CD4-positive, alpha-beta T cell (primary cell): ENCODE measurements at regions of chr13 and their contacts with region 1.

Region 1: GRCh38 chr13:74133657-74134201 is 475 bp downstream of the KLF12 start:
- DNase-seq: peak; percentile 77 to 97 (median 85)
- ATAC-seq: peak; percentile 55
- H3K4me3 ChIP-seq: peak overlapping the region; percentile 88
- H3K4me3 Mint-ChIP-seq: peak overlapping the region; percentile 100
- H3K27ac ChIP-seq: peak overlapping the region; percentile 86 to 90
- H3K27ac Mint-ChIP-seq: no peak overlapping the region
- H3K4me1 ChIP-seq: peaks cover 31% of the 10 kb centered on the region
- H3K4me1 Mint-ChIP-seq: peaks cover 42% of the 10 kb centered on the region
- H3K27me3 ChIP-seq: no peaks in the 10 kb centered on the region
- H3K27me3 Mint-ChIP-seq: peaks cover 6% of the 10 kb centered on the region
- CTCF ChIP-seq: no peak

Region 2: DNA sequence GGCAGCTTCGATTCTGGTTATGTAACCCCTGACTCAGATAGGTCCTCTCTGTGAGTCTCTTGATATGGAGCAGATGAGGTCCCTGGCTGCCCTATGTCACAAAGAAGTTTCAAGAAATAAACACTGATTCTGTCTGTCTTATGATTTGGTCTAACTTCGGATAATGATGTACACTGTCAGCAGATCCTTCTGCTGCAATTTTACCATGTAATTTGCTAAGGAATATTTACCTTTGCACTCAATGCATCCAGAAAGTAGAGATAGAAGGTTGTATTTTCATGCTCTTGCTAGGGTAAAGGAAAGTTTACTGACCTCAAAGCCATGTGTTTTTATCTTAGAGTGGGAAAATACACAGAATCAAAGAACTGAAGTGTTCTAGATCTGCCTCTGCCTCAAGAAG is 976.7 kb before region 1 on chr13:
- CTCF ChIA-PET with region 1: no interaction called
- POLR2A ChIA-PET with region 1: no interaction called
- intact Hi-C with region 1: no loop called
- DNase-seq: no peak
- ATAC-seq: no peak
- H3K4me3 ChIP-seq: no peak overlapping the region
- H3K4me3 Mint-ChIP-seq: no peak overlapping the region
- H3K27ac ChIP-seq: no peak overlapping the region
- H3K27ac Mint-ChIP-seq: no peak overlapping the region
- H3K4me1 ChIP-seq: no peaks in the 10 kb centered on the region
- H3K4me1 Mint-ChIP-seq: no peaks in the 10 kb centered on the region
- H3K27me3 ChIP-seq: no peaks in the 10 kb centered on the region
- H3K27me3 Mint-ChIP-seq: no peaks in the 10 kb centered on the region
- CTCF ChIP-seq: no peak

Region 3: DNA sequence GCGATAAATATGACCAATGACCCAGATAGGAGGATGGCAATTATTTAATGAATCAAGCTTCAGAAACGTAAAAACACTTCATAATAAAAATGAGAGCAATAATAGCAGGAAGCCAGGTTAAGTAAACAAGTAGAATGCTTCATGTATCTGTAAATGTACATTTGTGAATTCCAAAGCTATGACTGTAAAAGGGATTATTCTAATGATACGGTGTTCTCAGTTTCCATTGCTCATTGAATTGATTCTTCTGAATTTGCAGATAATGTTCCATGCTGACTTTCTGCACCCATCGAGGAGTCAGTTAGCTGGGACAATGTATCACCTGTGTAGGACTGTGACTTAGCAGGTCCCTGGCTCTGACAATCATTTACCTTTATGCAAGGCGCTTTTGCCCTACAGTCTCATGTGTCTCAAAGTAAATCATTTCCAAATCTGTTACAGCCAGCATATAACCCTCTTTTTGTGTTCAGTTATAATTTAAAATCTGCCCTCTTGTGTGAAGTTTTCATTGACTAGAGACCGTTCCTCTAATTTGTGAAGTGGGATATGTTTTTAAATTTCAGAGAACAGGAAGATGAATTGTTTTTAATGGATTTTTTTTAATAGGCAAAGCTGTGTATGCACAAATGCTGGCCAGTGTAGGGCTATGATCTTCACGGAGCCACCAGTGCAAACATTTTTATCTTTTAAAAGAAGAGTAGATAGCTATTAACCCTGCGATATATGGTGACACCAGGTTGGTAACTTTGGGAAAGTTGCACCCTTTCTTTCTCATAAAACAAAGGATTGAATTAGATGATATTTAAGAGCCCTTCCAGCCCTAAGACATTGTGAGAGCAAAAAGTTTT is 807.8 kb before region 1 on chr13:
- CTCF ChIA-PET with region 1: no interaction called
- POLR2A ChIA-PET with region 1: no interaction called
- intact Hi-C with region 1: no loop called
- DNase-seq: no peak
- ATAC-seq: no peak
- H3K4me3 ChIP-seq: no peak overlapping the region
- H3K4me3 Mint-ChIP-seq: no peak overlapping the region
- H3K27ac ChIP-seq: no peak overlapping the region
- H3K27ac Mint-ChIP-seq: no peak overlapping the region
- H3K4me1 ChIP-seq: no peaks in the 10 kb centered on the region
- H3K4me1 Mint-ChIP-seq: no peaks in the 10 kb centered on the region
- H3K27me3 ChIP-seq: no peaks in the 10 kb centered on the region
- H3K27me3 Mint-ChIP-seq: peaks cover 8% of the 10 kb centered on the region
- CTCF ChIP-seq: no peak

Region 4: DNA sequence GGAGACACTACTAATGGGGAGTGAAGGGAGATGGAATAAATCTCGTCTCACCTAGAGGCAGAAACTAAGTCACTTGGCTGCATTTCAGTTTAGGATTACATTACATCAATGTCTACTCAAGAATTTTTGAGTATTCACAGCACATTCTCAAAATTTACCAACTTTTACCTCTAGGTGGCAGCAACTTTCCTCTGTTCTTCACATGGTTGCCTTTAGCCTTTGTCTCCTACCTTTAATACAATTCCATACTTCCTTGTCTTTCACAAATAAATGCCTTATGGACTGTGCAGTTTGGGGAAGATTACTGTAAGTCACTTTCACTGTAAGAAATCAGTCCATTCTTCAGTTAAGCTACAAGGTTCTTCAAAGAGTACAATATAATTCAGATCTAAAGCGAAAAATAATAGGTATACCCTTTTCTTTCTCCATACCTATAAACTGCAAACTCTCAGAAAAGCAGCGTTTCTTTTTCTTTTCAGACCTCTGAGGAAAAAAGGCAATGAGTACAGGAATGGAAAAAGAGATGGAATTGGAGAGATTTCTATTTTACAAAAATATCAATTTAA is 378.9 kb before region 1 on chr13:
- CTCF ChIA-PET with region 1: no interaction called
- POLR2A ChIA-PET with region 1: interaction called, 4 read pairs
- intact Hi-C with region 1: loop called in 1 of 2 experiments (anchors 10 kb)
- DNase-seq: peak in 7 of 14 experiments; percentile 4 to 78 (median 59)
- ATAC-seq: peak; percentile 60
- H3K4me3 ChIP-seq: no peak overlapping the region
- H3K4me3 Mint-ChIP-seq: no peak overlapping the region
- H3K27ac ChIP-seq: no peak overlapping the region
- H3K27ac Mint-ChIP-seq: peak overlapping the region; percentile 21
- H3K4me1 ChIP-seq: peaks cover 2% of the 10 kb centered on the region
- H3K4me1 Mint-ChIP-seq: peaks cover 62% of the 10 kb centered on the region
- H3K27me3 ChIP-seq: no peaks in the 10 kb centered on the region
- H3K27me3 Mint-ChIP-seq: no peaks in the 10 kb centered on the region
- CTCF ChIP-seq: peak; percentile 86

Region 5: DNA sequence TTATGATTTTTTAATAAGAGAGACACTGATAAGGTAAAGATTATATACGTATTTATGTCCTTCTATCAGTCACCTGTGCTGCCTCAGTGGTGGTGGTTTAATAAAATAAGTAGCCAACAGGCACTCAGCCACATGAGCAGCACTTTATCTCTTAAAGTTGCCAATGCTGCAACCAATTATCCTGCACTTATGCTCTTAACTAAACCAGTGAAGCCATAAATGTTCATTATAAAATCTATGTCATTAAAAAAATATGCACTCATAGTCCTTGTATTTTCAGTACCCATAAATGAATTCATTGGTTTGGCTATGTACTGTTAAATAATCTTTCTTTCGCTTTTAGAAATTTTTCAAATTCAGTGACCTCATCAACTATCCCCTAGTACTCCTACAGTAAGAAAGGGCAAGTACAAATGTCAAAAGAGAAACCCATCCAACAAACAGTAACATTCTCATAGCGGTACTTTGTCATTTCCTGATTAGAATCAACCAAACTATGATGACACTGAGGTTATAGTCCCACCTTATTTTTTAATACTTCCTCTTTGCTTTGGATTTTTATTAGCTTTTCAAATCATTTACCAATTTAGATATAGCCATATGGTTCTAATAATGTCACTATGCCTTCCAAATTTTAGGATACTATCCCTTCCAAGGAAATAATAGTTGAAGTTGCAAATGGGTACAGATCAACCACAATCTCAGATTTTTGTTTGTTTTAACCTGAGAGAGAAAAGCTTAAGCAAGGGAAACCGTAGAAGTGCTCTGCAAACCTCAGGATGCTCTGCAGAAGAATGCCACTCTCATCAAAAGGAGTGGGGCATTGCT is 190.4 kb before region 1 on chr13:
- CTCF ChIA-PET with region 1: no interaction called
- POLR2A ChIA-PET with region 1: interaction called, 4 read pairs
- intact Hi-C with region 1: loop called in 1 of 2 experiments (anchors 5 kb)
- DNase-seq: peak in 3 of 14 experiments; percentile 56 to 83 (median 60)
- ATAC-seq: peak; percentile 92
- H3K4me3 ChIP-seq: no peak overlapping the region
- H3K4me3 Mint-ChIP-seq: peak overlapping the region; percentile 47
- H3K27ac ChIP-seq: peak overlapping the region; percentile 57 to 82
- H3K27ac Mint-ChIP-seq: peak overlapping the region; percentile 87
- H3K4me1 ChIP-seq: peaks cover 34% of the 10 kb centered on the region
- H3K4me1 Mint-ChIP-seq: peaks cover 89% of the 10 kb centered on the region
- H3K27me3 ChIP-seq: no peaks in the 10 kb centered on the region
- H3K27me3 Mint-ChIP-seq: no peaks in the 10 kb centered on the region
- CTCF ChIP-seq: no peak

Region 6: DNA sequence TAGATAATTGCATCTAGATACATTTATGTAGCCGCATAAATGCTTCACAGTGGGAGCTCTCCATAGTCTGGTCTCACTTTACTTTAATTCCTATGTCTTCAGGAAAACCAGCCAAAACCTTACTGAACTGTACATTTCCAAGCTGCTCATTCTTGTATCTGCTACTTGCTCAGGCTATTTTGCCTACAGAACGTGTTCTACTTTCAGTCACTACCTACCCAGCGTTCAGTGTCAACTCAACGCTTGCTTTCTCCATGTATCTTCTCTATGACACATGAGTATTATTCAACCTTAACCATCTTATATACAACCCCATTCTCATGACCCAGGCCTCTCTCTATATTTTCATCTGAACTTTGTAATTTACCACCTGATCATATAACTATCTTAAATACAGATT is 101.4 kb before region 1 on chr13:
- CTCF ChIA-PET with region 1: no interaction called
- POLR2A ChIA-PET with region 1: interaction called, 33 read pairs
- intact Hi-C with region 1: loop called (anchors 2 to 5 kb)
- DNase-seq: no peak
- ATAC-seq: no peak
- H3K4me3 ChIP-seq: no peak overlapping the region
- H3K4me3 Mint-ChIP-seq: no peak overlapping the region
- H3K27ac ChIP-seq: no peak overlapping the region
- H3K27ac Mint-ChIP-seq: peak overlapping the region; percentile 4
- H3K4me1 ChIP-seq: peaks cover 9% of the 10 kb centered on the region
- H3K4me1 Mint-ChIP-seq: peaks cover 86% of the 10 kb centered on the region
- H3K27me3 ChIP-seq: no peaks in the 10 kb centered on the region
- H3K27me3 Mint-ChIP-seq: no peaks in the 10 kb centered on the region
- CTCF ChIP-seq: no peak

Region 7: GRCh38 chr13:74090869-74091605 is 42.7 kb before region 1 on chr13:
- CTCF ChIA-PET with region 1: no interaction called
- POLR2A ChIA-PET with region 1: interaction called, 8 read pairs
- intact Hi-C with region 1: loop called (anchors 5 kb)
- DNase-seq: peak in 3 of 14 experiments; percentile 51 to 62 (median 52)
- ATAC-seq: peak; percentile 67
- H3K4me3 ChIP-seq: no peak overlapping the region
- H3K4me3 Mint-ChIP-seq: peak overlapping the region; percentile 64
- H3K27ac ChIP-seq: no peak overlapping the region
- H3K27ac Mint-ChIP-seq: peak overlapping the region; percentile 61
- H3K4me1 ChIP-seq: peaks cover 23% of the 10 kb centered on the region
- H3K4me1 Mint-ChIP-seq: peaks cover 72% of the 10 kb centered on the region
- H3K27me3 ChIP-seq: no peaks in the 10 kb centered on the region
- H3K27me3 Mint-ChIP-seq: no peaks in the 10 kb centered on the region
- CTCF ChIP-seq: no peak

Region 8: DNA sequence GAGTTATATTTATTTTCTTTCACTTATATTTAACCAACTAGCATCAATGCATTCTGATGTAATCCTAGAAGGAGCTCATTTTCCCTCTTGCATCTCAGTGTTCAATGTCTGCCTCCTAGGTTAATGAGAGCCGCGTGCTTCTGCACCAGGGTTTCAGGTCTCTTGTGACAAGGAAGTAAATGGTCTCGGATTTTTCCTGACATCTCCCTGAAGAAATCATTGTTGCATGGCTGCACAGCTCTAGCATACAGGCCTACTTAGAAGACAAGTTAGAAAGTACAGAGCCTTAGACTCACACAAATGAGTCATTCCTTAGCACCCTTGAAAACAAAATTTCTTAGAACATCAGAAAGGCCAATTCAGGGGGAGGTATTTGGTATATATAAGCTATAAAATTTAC is 57.7 kb after region 1 on chr13:
- CTCF ChIA-PET with region 1: no interaction called
- POLR2A ChIA-PET with region 1: interaction called, 3 read pairs
- intact Hi-C with region 1: loop called in 1 of 2 experiments (anchors 5 kb)
- DNase-seq: no peak
- ATAC-seq: no peak
- H3K4me3 ChIP-seq: no peak overlapping the region
- H3K4me3 Mint-ChIP-seq: no peak overlapping the region
- H3K27ac ChIP-seq: no peak overlapping the region
- H3K27ac Mint-ChIP-seq: no peak overlapping the region
- H3K4me1 ChIP-seq: peaks cover 3% of the 10 kb centered on the region
- H3K4me1 Mint-ChIP-seq: peaks cover 31% of the 10 kb centered on the region
- H3K27me3 ChIP-seq: no peaks in the 10 kb centered on the region
- H3K27me3 Mint-ChIP-seq: no peaks in the 10 kb centered on the region
- CTCF ChIP-seq: no peak

Region 9: GRCh38 chr13:74287724-74288169 is 154.0 kb after region 1 on chr13:
- CTCF ChIA-PET with region 1: interaction called, 67 read pairs
- POLR2A ChIA-PET with region 1: interaction called, 218 read pairs
- intact Hi-C with region 1: loop called (anchors 1 to 2 kb)
- DNase-seq: peak; percentile 71 to 98 (median 83)
- ATAC-seq: peak; percentile 70
- H3K4me3 ChIP-seq: peak overlapping the region; percentile 39
- H3K4me3 Mint-ChIP-seq: peak overlapping the region; percentile 80
- H3K27ac ChIP-seq: peak overlapping the region; percentile 78 to 82
- H3K27ac Mint-ChIP-seq: peak overlapping the region; percentile 84
- H3K4me1 ChIP-seq: peaks cover 39% of the 10 kb centered on the region
- H3K4me1 Mint-ChIP-seq: peaks cover 68% of the 10 kb centered on the region
- H3K27me3 ChIP-seq: no peaks in the 10 kb centered on the region
- H3K27me3 Mint-ChIP-seq: no peaks in the 10 kb centered on the region
- CTCF ChIP-seq: no peak